ENCODE measurements at regions of chr20 and their contacts with region 1.

Region 1: DNA sequence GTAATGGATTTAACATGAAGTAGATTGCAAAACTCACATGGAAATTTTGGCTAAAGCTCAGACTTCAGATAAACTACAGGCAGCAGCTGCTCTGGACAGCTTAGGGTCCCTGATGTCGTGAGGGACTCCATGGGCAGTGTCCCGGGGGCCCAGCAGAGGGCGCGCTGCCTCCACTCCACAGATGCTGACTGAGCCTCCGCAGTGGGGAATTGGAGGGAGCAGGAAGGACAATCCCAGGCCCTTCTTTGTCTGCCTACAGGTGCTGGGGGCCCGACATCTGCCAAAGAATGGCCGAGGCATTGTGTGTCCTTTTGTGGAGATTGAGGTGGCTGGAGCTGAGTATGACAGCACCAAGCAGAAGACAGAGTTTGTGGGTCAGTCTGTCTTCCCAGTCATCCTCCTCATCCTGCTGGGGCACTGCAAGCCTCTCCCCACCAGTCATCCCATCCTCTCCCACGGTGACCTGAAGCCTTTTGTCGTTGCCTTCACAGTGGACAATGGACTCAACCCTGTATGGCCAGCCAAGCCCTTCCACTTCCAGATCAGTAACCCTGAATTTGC is 35.9 kb downstream of the PLCG1 start:
- DNase-seq: peak; percentile 85
- H3K4me3 ChIP-seq: peak overlapping the region in 1 of 2 experiments; percentile 30; a peak in 1 of 4 replicates
- H3K27ac ChIP-seq: peak overlapping the region in 1 of 2 experiments; percentile 29; a peak in 1 of 4 replicates
- H3K4me1 ChIP-seq: peaks cover 0 to 10% of the 10 kb centered on the region in 2 experiments; a peak in 3 of 4 replicates
- H3K27me3 ChIP-seq: no peaks in the 10 kb centered on the region
- CTCF ChIP-seq: peak; percentile 95
- EP300 ChIP-seq: no peak
- RAD21 ChIP-seq: peak; percentile 92

Region 2: DNA sequence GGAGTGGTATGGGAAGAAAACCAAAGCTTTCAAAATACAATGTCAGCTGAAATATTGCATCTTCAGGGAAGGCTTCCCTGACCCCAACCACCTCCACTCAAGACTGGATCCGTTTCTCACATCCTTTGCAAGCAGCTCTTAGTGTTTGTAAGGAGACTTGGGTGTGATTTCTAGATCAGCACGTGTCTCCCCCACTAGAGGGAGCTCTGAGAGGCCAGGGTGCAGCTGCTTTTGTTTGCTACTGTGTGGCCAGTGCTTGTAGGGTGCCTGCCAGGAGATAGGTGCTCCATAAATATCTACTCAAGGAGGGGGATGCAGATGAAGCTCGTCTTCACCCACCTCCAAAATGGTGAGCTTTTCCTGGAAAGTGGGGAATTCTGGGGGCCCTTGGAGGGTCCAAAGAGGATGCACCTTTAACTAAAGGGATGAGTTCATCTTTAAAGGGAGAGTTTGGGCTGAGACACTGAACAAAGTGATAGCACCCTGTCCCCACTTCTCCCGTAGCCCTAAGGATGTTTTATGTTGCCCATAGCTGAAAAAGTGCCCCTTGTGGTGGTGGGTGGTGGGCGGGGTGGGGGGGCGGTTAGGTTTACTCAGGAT is 431.6 kb before region 1 on chr20:
- CTCF ChIA-PET with region 1: no interaction called
- POLR2A ChIA-PET with region 1: no interaction called
- DNase-seq: no peak
- H3K4me3 ChIP-seq: no peak overlapping the region
- H3K27ac ChIP-seq: no peak overlapping the region
- H3K4me1 ChIP-seq: peaks cover 0 to 10% of the 10 kb centered on the region in 2 experiments; a peak in 2 of 4 replicates
- H3K27me3 ChIP-seq: no peaks in the 10 kb centered on the region
- CTCF ChIP-seq: peak; percentile 54
- EP300 ChIP-seq: no peak
- RAD21 ChIP-seq: peak; percentile 48

Region 3: GRCh38 chr20:40892649-40893048 is 280.6 kb before region 1 on chr20:
- CTCF ChIA-PET with region 1: no interaction called
- POLR2A ChIA-PET with region 1: no interaction called
- DNase-seq: no peak
- H3K4me3 ChIP-seq: no peak overlapping the region
- H3K27ac ChIP-seq: no peak overlapping the region
- H3K4me1 ChIP-seq: peaks cover 0 to 17% of the 10 kb centered on the region in 2 experiments; a peak in 2 of 4 replicates
- H3K27me3 ChIP-seq: 0 out of 2 replicates have a peak, but pooled peaks cover 3% of the 10 kb centered on the region
- CTCF ChIP-seq: no peak; the same call in 1 of the 2 replicates
- EP300 ChIP-seq: no peak
- RAD21 ChIP-seq: peak; percentile 23; the same call in 1 of the 2 replicates

Region 4: DNA sequence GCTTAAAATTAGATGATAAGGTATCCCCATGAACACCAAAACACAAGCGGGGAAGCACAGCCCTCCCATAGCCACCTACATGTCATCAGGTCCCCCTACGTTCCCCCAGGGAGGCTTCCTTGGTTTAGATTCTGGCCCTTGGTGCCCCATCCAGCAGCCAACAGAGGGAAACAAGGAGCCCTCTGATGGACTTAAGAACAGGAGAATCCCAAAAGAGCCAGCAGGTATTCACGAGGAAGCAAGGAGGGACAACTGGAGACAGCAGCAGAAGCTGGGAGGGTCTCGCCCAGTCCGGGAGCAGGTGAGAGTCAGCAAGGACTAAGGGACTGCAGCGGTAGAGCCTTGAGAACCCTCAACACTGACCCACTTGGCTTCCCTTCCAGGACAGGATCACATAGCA is 203.0 kb before region 1 on chr20:
- CTCF ChIA-PET with region 1: interaction called, 10 read pairs
- POLR2A ChIA-PET with region 1: no interaction called
- DNase-seq: no peak
- H3K4me3 ChIP-seq: no peak overlapping the region
- H3K27ac ChIP-seq: no peak overlapping the region
- H3K4me1 ChIP-seq: peaks cover 0 to 2% of the 10 kb centered on the region in 2 experiments; a peak in 1 of 4 replicates
- H3K27me3 ChIP-seq: no peaks in the 10 kb centered on the region
- CTCF ChIP-seq: no peak
- EP300 ChIP-seq: no peak
- RAD21 ChIP-seq: no peak

Region 5: GRCh38 chr20:41086402-41087338 is 86.6 kb before region 1 on chr20:
- CTCF ChIA-PET with region 1: no interaction called
- POLR2A ChIA-PET with region 1: no interaction called
- DNase-seq: peak; percentile 76
- H3K4me3 ChIP-seq: no peak overlapping the region; a peak in 1 of 4 replicates
- H3K27ac ChIP-seq: peak overlapping the region; percentile 32 to 98; a peak in 3 of 4 replicates
- H3K4me1 ChIP-seq: peaks cover 0 to 19% of the 10 kb centered on the region in 2 experiments; a peak in 2 of 4 replicates
- H3K27me3 ChIP-seq: no peaks in the 10 kb centered on the region
- CTCF ChIP-seq: no peak
- EP300 ChIP-seq: peak in 1 of 2 experiments; percentile 94; a peak in 2 of 4 replicates
- RAD21 ChIP-seq: no peak

Region 6: DNA sequence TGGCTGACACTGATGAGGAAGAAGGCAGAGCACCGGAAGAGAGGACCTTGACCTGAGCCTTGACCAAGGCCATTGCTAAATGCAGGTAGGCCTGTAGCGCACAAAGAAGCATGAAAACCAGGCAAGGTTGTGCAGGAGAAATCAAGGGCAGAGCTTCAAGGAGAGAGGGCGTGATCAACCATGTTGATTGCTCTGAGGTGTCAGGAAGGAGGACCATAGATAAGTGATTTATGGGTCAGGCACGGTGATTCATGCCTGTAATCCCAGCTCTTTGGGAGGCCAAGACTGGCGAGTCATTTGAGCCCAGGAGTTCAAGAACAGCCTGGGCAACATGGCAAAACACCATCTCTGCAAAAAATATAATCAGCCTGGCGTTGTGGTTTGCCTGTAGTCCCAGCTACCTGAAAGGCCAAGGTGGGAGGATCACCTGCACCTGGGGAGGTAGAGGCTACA is 23.5 kb before region 1 on chr20:
- CTCF ChIA-PET with region 1: interaction called, 67 read pairs
- POLR2A ChIA-PET with region 1: no interaction called
- DNase-seq: no peak
- H3K4me3 ChIP-seq: no peak overlapping the region
- H3K27ac ChIP-seq: no peak overlapping the region
- H3K4me1 ChIP-seq: peaks cover 10 to 29% of the 10 kb centered on the region in 2 experiments; a peak in 2 of 4 replicates
- H3K27me3 ChIP-seq: no peaks in the 10 kb centered on the region
- CTCF ChIP-seq: no peak
- EP300 ChIP-seq: no peak
- RAD21 ChIP-seq: no peak

Region 7: DNA sequence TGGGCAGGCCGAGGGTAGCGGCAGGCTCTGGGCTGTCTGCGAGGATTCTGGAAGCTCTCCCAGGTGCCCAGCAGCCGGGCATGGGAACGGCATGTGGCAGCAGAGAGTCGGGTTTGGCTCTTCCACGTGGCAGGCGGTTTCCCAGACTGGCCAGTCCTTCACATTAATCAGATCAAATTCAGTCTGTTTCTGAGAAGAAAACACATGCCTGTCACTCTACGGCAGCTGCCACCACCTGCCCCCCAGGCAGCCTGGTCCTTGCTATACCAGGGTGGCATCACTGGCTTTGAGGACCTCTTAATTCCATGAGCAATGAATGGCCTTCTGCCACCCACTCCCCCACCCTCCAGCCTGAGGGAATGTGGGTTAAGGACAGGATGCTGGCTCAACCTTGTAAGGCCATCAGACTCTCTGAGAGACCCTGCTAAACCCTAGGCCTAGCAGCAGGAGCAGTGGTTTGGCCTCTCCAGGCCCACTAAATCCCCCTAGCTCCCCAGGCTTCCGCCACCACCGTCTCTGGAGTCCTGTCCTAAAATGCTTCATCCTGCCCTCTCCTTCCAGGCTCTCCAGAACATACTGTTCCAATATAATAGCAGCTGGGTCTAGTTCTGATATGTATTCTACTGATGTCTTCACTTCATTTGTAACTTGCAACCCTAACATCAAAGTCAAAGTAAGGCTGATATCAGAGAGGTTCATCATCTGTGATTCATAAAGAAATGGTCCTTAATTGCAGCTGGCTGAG is 11.9 kb after region 1 on chr20:
- CTCF ChIA-PET with region 1: interaction called, 14 read pairs
- POLR2A ChIA-PET with region 1: no interaction called
- DNase-seq: peak; percentile 52
- H3K4me3 ChIP-seq: no peak overlapping the region
- H3K27ac ChIP-seq: peak overlapping the region in 1 of 2 experiments; percentile 34; a peak in 2 of 4 replicates
- H3K4me1 ChIP-seq: peaks cover 0 to 12% of the 10 kb centered on the region in 2 experiments; a peak in 1 of 4 replicates
- H3K27me3 ChIP-seq: no peaks in the 10 kb centered on the region
- CTCF ChIP-seq: no peak
- EP300 ChIP-seq: no peak
- RAD21 ChIP-seq: peak; percentile 56

Region 8: GRCh38 chr20:41232973-41233926 is 60.0 kb after region 1 on chr20:
- CTCF ChIA-PET with region 1: interaction called, 47 read pairs
- POLR2A ChIA-PET with region 1: no interaction called
- DNase-seq: no peak
- H3K4me3 ChIP-seq: no peak overlapping the region
- H3K27ac ChIP-seq: peak overlapping the region in 1 of 2 experiments; percentile 65; a peak in 3 of 4 replicates
- H3K4me1 ChIP-seq: peaks cover 7 to 21% of the 10 kb centered on the region in 2 experiments; a peak in 3 of 4 replicates
- H3K27me3 ChIP-seq: no peaks in the 10 kb centered on the region
- CTCF ChIP-seq: no peak
- EP300 ChIP-seq: no peak
- RAD21 ChIP-seq: no peak